Heart right ventricle (tissue), 16 donors: ENCODE measurements at regions of chr12 and their contacts with region 1.

Region 1: GRCh38 chr12:71772735-71773134 is 18.1 kb downstream of the RAB21 start:
- DNase-seq: no peak
- ATAC-seq: no peak
- H3K4me3 ChIP-seq: no peak overlapping the region
- H3K27ac ChIP-seq: no peak overlapping the region
- H3K4me1 ChIP-seq: peaks cover 0 to 60% (median 46%) of the 10 kb centered on the region in 9 donors
- H3K27me3 ChIP-seq: no peaks in the 10 kb centered on the region
- CTCF ChIP-seq: no peak

Region 2: DNA sequence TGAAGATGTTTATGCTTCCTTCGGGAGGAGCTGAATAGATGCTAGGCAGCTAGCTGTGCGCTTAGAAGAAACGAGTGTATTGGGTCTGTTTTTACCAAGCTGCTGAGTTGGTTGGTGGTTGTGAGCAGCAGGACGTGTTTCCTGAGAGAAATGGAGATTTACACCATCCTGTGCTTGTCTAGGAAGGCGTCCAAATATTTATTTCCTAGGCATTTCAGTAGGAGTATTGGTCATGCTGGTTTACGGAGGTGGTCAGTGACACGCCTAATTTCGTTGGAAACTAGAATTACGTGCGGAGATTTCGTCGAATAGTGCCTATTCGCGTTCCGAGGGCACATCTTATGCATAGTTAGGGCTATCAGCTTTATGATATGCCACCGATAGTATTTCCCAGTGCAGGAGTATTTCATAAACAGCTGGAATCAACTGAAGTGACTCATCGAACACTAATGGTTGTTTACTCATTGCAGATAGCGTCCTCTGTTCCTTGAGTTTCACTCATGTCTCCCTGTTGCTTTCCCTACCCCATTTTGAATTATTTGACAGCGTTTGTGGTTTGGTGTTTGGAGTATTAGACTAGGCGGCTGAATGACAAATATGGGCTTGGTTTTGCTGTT is 67.6 kb after region 1 on chr12:
- intact Hi-C with region 1: loop called in 2 of 10 experiments (anchors 5 to 10 kb)
- DNase-seq: peak in 1 of 2 donors; percentile 10
- ATAC-seq: peak in 6 of 8 donors; percentile 2 to 58 (median 41)
- H3K4me3 ChIP-seq: peak overlapping the region; percentile 63 to 80 (median 69)
- H3K27ac ChIP-seq: peak overlapping the region; percentile 89 to 96 (median 93)
- H3K4me1 ChIP-seq: peaks cover 0 to 58% (median 46%) of the 10 kb centered on the region in 9 donors
- H3K27me3 ChIP-seq: no peaks in the 10 kb centered on the region
- CTCF ChIP-seq: no peak